ENCODE measurements at regions of chr1 and their contacts with region 1.

Region 1: GRCh38 chr1:205591522-205592351 is 40.1 kb downstream of the ELK4 start:
- DNase-seq: peak; percentile 94
- ATAC-seq: peak; percentile 95

Region 2: DNA sequence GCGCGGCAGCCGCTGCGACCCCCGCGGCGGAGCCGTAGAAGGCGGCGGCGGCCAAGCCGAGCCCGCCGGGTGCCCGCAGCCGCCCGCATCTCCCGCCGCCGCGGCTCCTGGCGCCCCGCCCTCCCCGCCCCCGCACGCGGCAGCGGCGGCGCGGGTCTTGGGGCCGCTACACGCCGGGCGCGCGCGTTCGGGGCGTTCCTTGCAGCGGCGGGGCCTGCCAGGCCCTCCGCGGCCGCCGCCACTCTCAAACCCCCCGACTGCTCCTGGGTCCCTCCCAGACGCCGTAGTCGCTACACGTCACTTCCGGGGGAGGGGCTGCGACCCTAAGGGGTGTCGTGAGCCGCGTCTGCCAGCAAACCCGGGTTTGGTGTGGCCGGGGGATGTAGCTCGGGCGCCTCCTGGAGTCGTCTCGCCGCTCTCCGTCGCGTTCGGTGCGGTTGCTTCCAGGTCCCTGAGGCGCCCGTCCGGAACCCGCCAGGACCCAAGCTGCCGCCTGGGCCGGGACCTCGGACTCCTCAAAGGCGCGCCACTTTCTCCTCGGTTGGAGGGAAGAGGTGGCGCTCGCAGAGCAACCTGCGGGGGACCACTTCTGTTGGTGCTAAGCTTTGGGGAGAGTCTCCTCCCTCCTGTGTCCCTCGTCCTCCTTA is 40.1 kb after region 1 on chr1 and contains the start of gene ELK4:
- intact Hi-C with region 1: loop called (anchors 1 kb)
- DNase-seq: peak; percentile 99
- ATAC-seq: peak; percentile 99
- total RNA-seq, gene ELK4: 35.5 TPM

Region 3: GRCh38 chr1:205711104-205712020 is 119.6 kb after region 1 on chr1:
- intact Hi-C with region 1: loop called (anchors 5 kb)
- DNase-seq: no peak
- ATAC-seq: peak; percentile 83

Measured in Right ventricle myocardium inferior (tissue), 1 donor.